Body of pancreas (tissue), 4 donors: ENCODE measurements at regions of chr12 and their contacts with region 1.

Region 1: GRCh38 chr12:77679686-77680085 is 151.0 kb upstream of the NAV3 start:
- DNase-seq: no peak
- ATAC-seq: no peak
- H3K4me3 ChIP-seq: no peak overlapping the region
- H3K27ac ChIP-seq: no peak overlapping the region
- H3K4me1 ChIP-seq: no peaks in the 10 kb centered on the region
- H3K27me3 ChIP-seq: no peaks in the 10 kb centered on the region
- CTCF ChIP-seq: no peak
- POLR2A ChIP-seq: no peak

Region 2: GRCh38 chr12:77049767-77050353 is 629.8 kb before region 1 on chr12:
- intact Hi-C with region 1: loop called (anchors 10 kb)
- DNase-seq: peak in 3 of 4 donors; percentile 12 to 45 (median 17)
- ATAC-seq: peak; percentile 83
- H3K4me3 ChIP-seq: no peak overlapping the region
- H3K27ac ChIP-seq: no peak overlapping the region
- H3K4me1 ChIP-seq: no peaks in the 10 kb centered on the region
- H3K27me3 ChIP-seq: no peaks in the 10 kb centered on the region
- CTCF ChIP-seq: peak; percentile 57 to 82 (median 73)
- POLR2A ChIP-seq: no peak

Region 3: GRCh38 chr12:77893918-77894317 is 214.2 kb after region 1 on chr12:
- intact Hi-C with region 1: no loop called
- DNase-seq: peak; percentile 83 to 86 (median 84)
- ATAC-seq: peak; percentile 96
- H3K4me3 ChIP-seq: no peak overlapping the region
- H3K27ac ChIP-seq: peak overlapping the region in 3 of 4 donors; percentile 54 to 70 (median 63)
- H3K4me1 ChIP-seq: peaks cover 27% of the 10 kb centered on the region
- H3K27me3 ChIP-seq: no peaks in the 10 kb centered on the region
- CTCF ChIP-seq: peak in 1 of 7 experiments; percentile 2
- POLR2A ChIP-seq: no peak

Region 4: GRCh38 chr12:77965790-77966189 is 286.1 kb after region 1 on chr12:
- intact Hi-C with region 1: no loop called
- DNase-seq: no peak
- ATAC-seq: no peak
- H3K4me3 ChIP-seq: no peak overlapping the region
- H3K27ac ChIP-seq: no peak overlapping the region
- H3K4me1 ChIP-seq: no peaks in the 10 kb centered on the region
- H3K27me3 ChIP-seq: no peaks in the 10 kb centered on the region
- CTCF ChIP-seq: no peak
- POLR2A ChIP-seq: no peak